ENCODE measurements at regions of chr2 and their contacts with region 1.

Region 1: GRCh38 chr2:36355151-36355889 is at the start of gene CRIM1:
- DNase-seq: peak; percentile 68 to 86 (median 80)
- H3K4me3 ChIP-seq: peak within 1 kb of the TSS; percentile 61 to 95 (median 82)
- H3K27ac ChIP-seq: peak within 1 kb of the TSS; percentile 57 to 98 (median 93)
- H3K27me3 ChIP-seq: no peaks in the 10 kb centered on the region
- CTCF ChIP-seq: peak in 22 of 56 donors; percentile 5 to 49 (median 26)
- total RNA-seq, gene CRIM1: 57.7 to 155 (median 82.6) TPM

Region 2: DNA sequence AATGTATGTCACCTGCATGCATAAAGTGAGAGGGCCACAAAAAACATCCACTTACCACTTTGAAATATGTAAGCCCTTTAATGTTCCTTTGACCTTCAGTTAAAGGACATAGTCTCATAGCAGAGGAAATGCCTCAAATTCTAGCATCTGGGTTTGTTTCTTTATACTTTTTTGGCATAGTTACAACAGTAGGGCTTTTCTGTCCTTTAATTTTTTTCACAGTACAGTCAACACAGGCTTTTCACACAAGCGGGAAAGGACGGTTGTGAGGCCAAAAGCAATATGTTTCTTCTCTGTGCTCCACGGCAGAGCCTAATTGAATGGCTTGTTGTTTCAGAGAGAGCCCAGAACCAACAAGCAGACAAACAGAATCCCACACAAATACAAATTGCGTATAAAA is 57.9 kb after region 1 on chr2:
- intact Hi-C with region 1: loop called in 1 of 2 experiments (anchors 2 kb)
- DNase-seq: no peak
- H3K4me3 ChIP-seq: peak overlapping the region in 40 of 59 donors; percentile 8 to 54 (median 26)
- H3K27ac ChIP-seq: peak overlapping the region in 36 of 59 donors; percentile 3 to 81 (median 38)
- H3K27me3 ChIP-seq: no peaks in the 10 kb centered on the region
- CTCF ChIP-seq: peak in 1 of 56 donors; percentile 21

Region 3: GRCh38 chr2:36507408-36507812 is 152.1 kb after region 1 on chr2:
- intact Hi-C with region 1: loop called (anchors 5 kb)
- DNase-seq: peak in 7 of 10 donors; percentile 12 to 68 (median 50)
- H3K4me3 ChIP-seq: no peak overlapping the region
- H3K27ac ChIP-seq: peak overlapping the region in 1 of 59 donors; percentile 7
- H3K27me3 ChIP-seq: no peaks in the 10 kb centered on the region
- CTCF ChIP-seq: peak; percentile 9 to 83 (median 69)

Region 4: DNA sequence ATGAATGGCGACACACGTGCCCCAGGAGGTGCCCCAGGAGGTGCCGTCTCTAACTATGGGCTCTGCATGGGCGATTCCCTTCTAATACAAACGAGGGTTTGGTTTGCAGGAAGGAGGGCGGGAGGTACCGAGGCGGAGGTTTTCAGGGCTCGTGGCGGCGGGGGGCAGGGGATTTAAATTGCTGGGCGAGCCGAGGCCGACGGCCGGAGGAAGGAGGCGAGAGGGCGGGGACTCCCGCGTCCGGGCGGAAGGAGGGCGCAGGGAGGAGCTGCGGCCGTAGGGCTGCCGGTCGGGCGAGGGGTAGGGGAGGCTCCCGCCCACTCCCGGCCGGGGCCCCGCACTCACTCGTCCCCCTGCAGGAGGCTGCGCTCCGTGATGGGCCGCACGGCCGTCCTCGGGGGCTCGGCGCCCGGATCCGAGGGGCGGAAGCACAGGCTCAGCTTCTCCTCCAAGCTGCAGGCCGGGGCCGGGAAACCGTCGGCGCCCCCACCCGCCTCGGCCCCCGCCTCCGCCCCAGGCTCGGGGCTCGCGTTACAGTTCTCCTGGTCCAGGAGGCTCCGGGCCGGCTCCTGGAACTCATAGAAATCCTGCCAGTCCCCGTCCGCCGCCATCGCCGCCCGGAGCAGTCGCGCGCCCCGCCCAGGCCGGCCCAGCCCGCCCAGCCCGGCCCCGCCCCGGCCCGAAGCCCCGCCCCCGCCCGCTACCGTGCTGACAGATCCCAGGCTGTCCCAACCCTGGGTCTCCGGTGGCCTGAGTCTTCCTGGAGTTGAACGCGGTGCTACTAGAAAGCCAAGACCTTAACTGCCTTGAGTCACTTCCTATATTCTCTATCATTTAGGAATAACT is 242.4 kb after region 1 on chr2 and contains the start of gene FEZ2:
- intact Hi-C with region 1: loop called in 1 of 2 experiments (anchors 5 kb)
- DNase-seq: peak; percentile 34 to 80 (median 60)
- H3K4me3 ChIP-seq: peak within 1 kb of the TSS; percentile 57 to 100 (median 97)
- H3K27ac ChIP-seq: peak within 1 kb of the TSS; percentile 54 to 98 (median 95)
- H3K27me3 ChIP-seq: no peaks in the 10 kb centered on the region
- CTCF ChIP-seq: peak in 15 of 56 donors; percentile 5 to 37 (median 20)
- total RNA-seq, gene FEZ2: 57.1 to 108 (median 87.8) TPM

Region 5: DNA sequence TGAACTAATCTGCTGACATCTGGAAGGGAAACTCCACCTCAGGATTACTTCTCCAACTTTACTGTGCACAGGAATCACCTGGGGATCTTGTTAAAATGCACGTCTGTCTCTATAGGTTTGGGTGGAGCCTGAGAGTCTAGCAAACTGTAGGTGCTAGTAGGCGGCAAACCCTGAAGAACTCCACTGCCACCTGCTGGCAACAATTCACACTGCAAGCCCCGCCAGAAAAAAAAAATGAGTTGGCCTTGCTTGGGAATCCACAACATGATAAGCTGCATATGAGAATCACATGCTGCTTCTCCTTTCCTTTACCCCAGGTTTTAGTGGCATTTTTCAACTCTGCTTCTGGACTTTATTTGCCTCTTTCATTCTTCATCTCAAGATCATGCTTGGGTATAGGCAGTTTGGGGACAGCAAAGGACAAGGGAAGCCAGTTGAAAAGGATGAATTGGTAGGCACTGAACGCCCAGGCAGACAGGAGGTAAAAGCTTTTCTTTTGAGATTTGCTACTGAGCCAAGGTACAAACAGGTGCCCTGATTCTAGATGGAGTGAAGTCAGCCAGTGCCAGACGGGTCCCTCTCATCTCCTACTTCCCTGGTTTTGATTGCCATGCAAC is 430.0 kb after region 1 on chr2:
- intact Hi-C with region 1: loop called in 1 of 2 experiments (anchors 5 kb)
- DNase-seq: peak in 6 of 10 donors; percentile 18 to 73 (median 38)
- H3K4me3 ChIP-seq: no peak overlapping the region
- H3K27ac ChIP-seq: no peak overlapping the region
- H3K27me3 ChIP-seq: no peaks in the 10 kb centered on the region
- CTCF ChIP-seq: peak; percentile 66 to 96 (median 86)

Measured in dorsolateral prefrontal cortex (tissue), 120 donors.